Activated T-helper 1 cell treated with anti-CD3 and anti-CD28 coated beads, Interleukin-12 subunit alpha, Interleukin-12 subunit beta, Interleukin-2, Interleukin-4 antibody, amounts not matched to agents 30 ng/mL and 10 ng/mL and 1 ng/mL, durations not matched to agents 14 hours and 24 hours and 36 hours (primary cell): ENCODE measurements at regions of chr6 and their contacts with region 1.

Region 1: DNA sequence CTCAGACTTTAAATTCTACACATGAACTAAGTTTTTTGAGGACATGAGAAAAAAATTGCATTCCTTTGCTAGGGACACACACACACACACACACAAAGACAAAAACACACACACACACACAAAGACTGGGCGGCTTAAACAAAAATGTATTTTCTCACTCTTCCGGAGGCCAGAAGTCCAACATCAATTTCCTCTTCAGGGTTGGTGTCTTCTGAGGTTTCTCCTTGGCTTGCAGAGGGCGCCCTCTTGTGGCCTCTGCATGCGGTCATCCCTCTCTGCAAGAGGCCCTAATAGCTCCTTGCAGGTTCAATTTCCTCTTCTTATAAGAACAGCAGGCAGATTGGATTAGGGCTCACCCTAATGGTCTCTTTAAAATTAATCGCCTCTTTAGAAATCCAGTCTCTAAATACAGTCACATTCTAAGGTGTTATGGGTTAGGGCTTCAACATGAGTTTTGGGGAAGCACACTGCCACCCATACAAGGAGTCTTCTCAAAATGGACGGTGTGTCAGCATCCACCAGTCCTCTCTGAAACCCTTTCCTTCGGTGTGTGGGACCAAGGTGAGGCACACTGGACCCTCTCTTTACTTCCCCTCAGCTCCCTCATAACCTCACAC is 61.4 kb downstream of the GPR6 start:
- DNase-seq: peak; percentile 73
- H3K4me3 Mint-ChIP-seq: peak overlapping the region; percentile 83
- H3K27ac Mint-ChIP-seq: peak overlapping the region; percentile 59
- H3K4me1 Mint-ChIP-seq: peaks cover 19% of the 10 kb centered on the region
- H3K27me3 Mint-ChIP-seq: peaks cover 2% of the 10 kb centered on the region

Region 2: DNA sequence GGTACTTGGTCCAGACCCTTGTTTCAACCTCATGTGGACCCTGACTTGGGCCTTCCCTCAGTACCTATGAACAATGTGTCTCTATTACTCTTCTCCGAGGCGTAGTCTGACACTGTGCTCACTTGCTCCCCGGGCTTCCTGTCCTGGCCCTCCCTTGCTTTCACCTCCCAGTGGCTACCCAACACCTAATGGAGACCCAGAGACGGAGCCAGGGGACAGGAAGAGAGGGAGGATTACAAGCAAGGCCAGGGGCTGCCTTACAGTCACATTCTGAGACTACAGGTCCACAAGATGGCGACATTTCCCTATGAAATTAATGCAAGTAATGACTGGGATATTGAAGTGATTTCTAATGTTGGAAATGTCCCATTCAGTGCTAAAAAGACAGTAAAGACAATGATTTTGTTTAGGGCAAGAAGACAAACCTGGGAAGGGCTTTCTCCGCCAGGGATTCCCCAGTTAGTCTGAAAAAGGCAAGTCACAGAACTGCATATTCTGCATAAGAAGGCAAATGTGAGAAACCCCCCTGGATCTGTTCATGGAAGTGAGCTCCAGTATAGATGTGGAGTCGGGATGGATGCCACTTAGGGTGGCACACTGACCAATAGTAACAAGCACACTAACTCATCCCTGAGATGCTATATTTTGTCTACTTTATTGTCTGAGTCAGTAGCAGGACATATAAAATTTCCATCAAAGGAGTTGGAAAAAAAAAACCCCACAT is 512.4 kb before region 1 on chr6:
- intact Hi-C with region 1: loop called (anchors 1 kb)
- DNase-seq: peak; percentile 35
- H3K4me3 Mint-ChIP-seq: no peak overlapping the region
- H3K27ac Mint-ChIP-seq: no peak overlapping the region
- H3K4me1 Mint-ChIP-seq: no peaks in the 10 kb centered on the region
- H3K27me3 Mint-ChIP-seq: peaks cover 5% of the 10 kb centered on the region

Region 3: GRCh38 chr6:109705258-109705657 is 334.2 kb before region 1 on chr6:
- intact Hi-C with region 1: loop called (anchors 1 kb)
- DNase-seq: peak; percentile 53
- H3K4me3 Mint-ChIP-seq: no peak overlapping the region
- H3K27ac Mint-ChIP-seq: no peak overlapping the region
- H3K4me1 Mint-ChIP-seq: peaks cover 5% of the 10 kb centered on the region
- H3K27me3 Mint-ChIP-seq: no peaks in the 10 kb centered on the region

Region 4: DNA sequence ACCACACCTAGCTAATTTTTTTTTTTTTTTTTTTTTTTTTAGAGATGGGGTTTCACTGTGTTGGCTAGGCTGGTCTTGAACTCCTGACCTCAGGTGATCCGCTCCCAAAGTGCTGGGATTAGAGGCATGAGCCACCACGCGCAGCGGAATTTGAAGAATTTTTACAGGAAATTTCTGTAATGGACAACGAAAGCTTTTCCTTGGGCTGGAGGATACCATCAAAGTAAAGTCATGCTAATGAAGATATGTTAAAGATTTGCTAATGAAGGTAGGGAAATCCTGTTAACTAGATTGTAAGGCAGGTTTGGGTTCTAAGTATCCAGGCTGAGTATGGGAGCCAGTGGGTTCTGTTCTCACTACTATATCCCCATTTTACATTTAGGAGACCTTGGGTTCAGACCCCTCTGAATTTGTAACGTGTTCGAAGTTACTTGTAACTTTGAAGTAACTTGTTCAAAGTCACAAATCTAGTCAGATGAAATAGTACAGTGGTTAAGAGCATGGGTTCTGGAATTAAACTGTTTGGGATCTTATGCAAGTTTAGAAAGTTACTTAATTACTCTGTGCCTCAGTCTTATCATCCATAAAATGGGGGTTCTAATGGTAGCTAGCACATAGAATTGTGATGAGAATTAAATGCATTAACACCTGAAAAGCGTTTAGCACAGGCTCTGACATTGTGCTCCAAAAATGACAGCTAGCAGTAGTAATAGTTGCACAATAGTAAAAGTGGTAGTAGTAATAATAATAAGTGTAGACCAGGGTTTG is 184.7 kb before region 1 on chr6:
- intact Hi-C with region 1: no loop called
- DNase-seq: no peak
- H3K4me3 Mint-ChIP-seq: no peak overlapping the region
- H3K27ac Mint-ChIP-seq: no peak overlapping the region
- H3K4me1 Mint-ChIP-seq: no peaks in the 10 kb centered on the region
- H3K27me3 Mint-ChIP-seq: peaks cover 2% of the 10 kb centered on the region

Region 5: DNA sequence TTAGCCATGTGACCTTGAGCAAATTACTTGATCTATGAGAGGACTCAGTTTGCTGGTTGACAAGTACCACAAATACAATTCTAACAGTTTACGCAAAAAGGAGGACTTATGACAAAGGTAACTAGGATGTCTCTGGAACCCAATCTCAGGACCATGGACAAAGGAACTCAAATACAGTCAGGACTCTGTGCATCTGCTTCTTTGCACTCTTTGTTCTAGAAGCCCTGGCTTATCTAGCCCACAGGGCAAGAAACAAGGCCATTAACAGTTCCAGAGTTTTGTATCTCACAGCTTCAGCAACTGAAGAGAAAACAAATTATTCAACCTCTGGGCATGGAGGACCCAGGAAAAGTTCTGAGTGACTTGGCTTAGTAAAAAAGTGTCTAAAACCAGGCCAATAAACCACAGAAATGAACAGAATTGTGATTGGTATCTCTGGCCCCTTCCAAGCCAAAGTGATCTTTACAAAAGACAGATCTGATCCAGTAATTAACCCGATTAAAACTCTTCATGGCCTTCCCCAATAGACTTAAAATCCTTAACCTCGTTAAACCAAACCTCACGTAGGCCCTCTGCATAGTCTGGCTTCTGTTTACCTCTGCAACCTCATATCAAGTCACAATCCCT is 134.1 kb after region 1 on chr6:
- intact Hi-C with region 1: no loop called
- DNase-seq: no peak
- H3K4me3 Mint-ChIP-seq: no peak overlapping the region
- H3K27ac Mint-ChIP-seq: no peak overlapping the region
- H3K4me1 Mint-ChIP-seq: peaks cover 5% of the 10 kb centered on the region
- H3K27me3 Mint-ChIP-seq: peaks cover 26% of the 10 kb centered on the region

Region 6: GRCh38 chr6:110389689-110390382 is 350.4 kb after region 1 on chr6:
- intact Hi-C with region 1: loop called (anchors 1 kb)
- DNase-seq: no peak
- H3K4me3 Mint-ChIP-seq: no peak overlapping the region
- H3K27ac Mint-ChIP-seq: no peak overlapping the region
- H3K4me1 Mint-ChIP-seq: peaks cover 10% of the 10 kb centered on the region
- H3K27me3 Mint-ChIP-seq: no peaks in the 10 kb centered on the region